A673 (cell line): ENCODE measurements at regions of chr2 and their contacts with region 1.

Region 1: DNA sequence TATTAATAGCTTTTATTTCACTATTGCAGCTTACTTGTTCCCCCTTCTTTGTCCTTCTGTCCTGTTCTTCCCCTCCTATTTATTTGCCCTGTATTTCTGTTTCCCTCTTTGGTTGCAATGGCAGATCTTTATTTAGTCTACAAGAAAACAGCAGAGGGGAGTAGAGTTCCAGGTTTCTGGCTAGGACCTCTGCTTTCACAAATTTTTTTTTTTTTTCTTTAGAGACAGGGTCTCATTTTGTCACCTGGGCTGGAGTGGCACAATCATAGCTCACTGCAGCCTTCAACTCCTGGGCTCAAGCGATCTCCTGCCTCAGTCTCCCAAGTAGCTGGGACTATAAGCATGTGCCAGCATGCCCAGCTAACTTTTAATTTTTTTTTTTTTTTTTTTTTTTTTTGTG is 188.1 kb upstream of the SPRED2 start:
- DNase-seq: peak; percentile 49
- H3K4me3 ChIP-seq: no peak overlapping the region
- H3K27ac ChIP-seq: no peak overlapping the region
- H3K4me1 ChIP-seq: peaks cover 9% of the 10 kb centered on the region
- H3K27me3 ChIP-seq: no peaks in the 10 kb centered on the region
- CTCF ChIP-seq: peak; percentile 52

Region 2: DNA sequence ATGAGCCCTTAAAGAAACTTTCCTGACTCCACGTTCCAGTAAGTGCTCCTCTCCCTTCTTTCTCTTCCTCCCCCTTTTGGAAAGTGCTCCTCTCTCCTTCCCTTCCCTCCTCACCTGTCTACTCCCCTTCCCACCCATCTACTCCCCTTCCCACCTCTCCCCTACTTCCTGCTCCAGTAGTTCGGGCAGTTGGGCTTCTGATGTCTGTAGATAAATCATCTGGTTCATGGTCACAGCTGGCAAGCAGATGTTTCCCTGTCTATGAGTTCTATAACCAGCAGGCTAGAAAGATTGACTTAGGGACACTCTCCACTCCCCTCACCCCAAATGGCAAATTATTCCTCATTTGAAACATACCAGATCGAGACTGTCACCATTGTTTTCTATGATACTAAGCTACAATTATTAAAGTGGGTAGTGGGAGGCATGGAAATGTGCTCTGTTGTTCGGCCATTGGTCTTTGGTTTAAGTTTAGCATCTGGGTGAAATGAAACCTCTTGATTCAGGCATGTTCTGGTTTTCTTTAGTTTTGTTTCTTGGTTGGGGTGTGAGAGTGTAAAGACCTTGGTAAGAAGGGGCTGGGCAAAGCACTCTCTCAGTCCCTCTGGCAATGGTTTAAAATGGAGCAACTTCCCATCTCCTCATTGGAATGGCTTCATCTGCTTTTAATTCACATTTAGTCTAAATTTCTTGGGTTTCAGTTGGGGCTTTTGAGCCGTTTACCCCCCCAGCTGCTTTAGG is 225.1 kb after region 1 on chr2:
- CTCF ChIA-PET with region 1: interaction called, 10 read pairs
- POLR2A ChIA-PET with region 1: no interaction called
- intact Hi-C with region 1: no loop called
- DNase-seq: no peak
- H3K4me3 ChIP-seq: no peak overlapping the region
- H3K27ac ChIP-seq: no peak overlapping the region
- H3K4me1 ChIP-seq: no peaks in the 10 kb centered on the region
- H3K27me3 ChIP-seq: no peaks in the 10 kb centered on the region
- CTCF ChIP-seq: no peak